Activated CD4-positive, alpha-beta memory T cell treated with anti-CD3 and anti-CD28 coated beads for 36 hours (primary cell): ENCODE measurements at regions of chr11 and their contacts with region 1.

Region 1: DNA sequence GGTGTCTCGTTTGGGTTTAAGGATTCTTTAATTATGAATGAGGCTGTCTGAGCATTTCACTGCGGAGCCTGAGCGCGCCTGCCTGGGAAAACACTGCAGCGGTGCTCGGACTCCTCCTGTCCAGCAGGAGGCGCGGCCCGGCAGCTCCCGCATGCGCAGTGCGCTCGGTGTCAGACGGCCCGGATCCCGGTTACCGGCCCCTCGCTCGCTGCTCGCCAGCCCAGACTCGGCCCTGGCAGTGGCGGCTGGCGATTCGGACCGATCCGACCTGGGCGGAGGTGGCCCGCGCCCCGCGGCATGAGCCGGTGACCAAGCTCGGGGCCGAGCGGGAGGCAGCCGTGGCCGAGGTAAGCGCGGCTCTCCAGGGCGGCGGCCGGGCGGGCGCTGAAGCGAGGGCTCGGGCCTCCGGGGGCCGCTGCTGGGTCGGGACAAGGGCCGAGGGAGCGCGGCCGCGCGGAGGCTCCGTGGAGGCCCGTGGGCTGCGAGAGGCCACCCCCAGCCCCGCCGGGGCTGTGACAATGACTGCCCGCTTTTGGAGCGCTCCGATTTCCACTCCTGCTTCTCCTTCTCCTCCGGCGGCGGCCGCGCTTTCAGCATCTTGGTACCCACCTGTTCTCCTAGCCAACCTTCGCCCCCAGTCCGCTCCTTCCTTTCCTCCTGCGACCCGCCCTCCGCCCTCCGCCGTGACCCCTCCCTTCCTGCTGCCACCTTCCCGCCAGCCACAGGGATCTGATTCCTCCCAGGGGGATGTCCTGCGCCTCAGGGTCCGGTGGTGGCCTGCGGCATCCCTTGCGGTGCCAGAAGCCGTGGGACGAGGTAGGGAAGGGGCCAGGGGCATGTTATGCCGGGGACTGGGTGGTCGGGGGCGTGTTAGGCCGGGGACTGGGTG is at the start of gene EXT2:
- DNase-seq: peak; percentile 90
- H3K4me3 Mint-ChIP-seq: peak within 1 kb of the TSS; percentile 83
- H3K27ac Mint-ChIP-seq: no peak within 1 kb of the TSS
- H3K4me1 Mint-ChIP-seq: peaks cover 26% of the 10 kb centered on the region
- H3K27me3 Mint-ChIP-seq: no peaks in the 10 kb centered on the region
- total RNA-seq, gene EXT2: 27.0 to 28.1 TPM

Region 2: DNA sequence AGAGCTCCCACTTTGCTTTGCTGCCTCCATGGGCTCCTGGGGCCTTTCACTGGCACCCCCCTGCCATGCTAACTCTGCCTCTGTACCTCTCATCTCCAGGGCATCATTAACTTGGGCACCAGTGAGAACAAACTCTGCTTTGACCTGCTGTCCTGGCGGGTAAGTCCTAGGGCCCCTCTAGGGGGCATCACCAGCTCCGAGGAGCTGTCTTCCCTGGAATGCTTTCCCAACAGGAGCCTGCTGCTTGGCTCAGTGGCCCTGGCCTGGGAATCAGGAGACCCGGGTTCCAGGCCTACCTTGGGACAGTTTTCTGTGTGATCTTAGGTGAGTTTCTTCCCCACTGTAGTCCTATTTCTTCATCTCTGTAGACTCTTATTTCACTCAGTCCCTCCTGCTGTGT is 24.6 kb before region 1 on chr11:
- CTCF ChIA-PET with region 1: interaction called, 21 read pairs
- POLR2A ChIA-PET with region 1: interaction called, 3 read pairs
- intact Hi-C with region 1: no loop called
- DNase-seq: no peak
- H3K4me3 Mint-ChIP-seq: no peak overlapping the region
- H3K27ac Mint-ChIP-seq: no peak overlapping the region
- H3K4me1 Mint-ChIP-seq: peaks cover 14% of the 10 kb centered on the region
- H3K27me3 Mint-ChIP-seq: no peaks in the 10 kb centered on the region

Region 3: DNA sequence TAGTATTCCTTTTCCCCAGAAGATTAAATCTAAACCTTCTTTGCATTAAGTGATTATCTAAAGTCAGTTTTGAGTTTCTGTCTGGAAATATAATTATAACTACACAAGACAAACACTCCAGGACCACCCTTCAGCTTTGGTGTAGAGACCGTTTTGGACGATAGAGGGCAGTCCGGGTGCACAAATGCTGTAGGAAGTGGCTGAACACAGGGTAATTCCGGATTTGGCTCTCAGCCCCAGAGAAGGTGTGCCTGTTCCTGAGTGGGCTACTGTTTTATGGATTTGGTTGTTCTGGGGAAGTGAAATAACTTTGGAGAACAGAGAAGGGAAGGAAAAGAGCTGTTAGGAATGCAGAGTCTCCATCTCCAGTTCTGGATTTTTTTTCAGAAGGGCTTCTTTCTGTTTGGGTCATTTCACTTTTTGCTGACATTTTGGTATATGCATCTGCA is 14.5 kb after region 1 on chr11:
- CTCF ChIA-PET with region 1: interaction called, 101 read pairs
- POLR2A ChIA-PET with region 1: interaction called, 9 read pairs
- intact Hi-C with region 1: no loop called
- DNase-seq: peak; percentile 70
- H3K4me3 Mint-ChIP-seq: no peak overlapping the region
- H3K27ac Mint-ChIP-seq: no peak overlapping the region
- H3K4me1 Mint-ChIP-seq: peaks cover 8% of the 10 kb centered on the region
- H3K27me3 Mint-ChIP-seq: no peaks in the 10 kb centered on the region

Region 4: GRCh38 chr11:44138286-44138685 is 42.5 kb after region 1 on chr11:
- CTCF ChIA-PET with region 1: interaction called, 13 read pairs
- POLR2A ChIA-PET with region 1: no interaction called
- intact Hi-C with region 1: no loop called
- DNase-seq: no peak
- H3K4me3 Mint-ChIP-seq: no peak overlapping the region
- H3K27ac Mint-ChIP-seq: no peak overlapping the region
- H3K4me1 Mint-ChIP-seq: no peaks in the 10 kb centered on the region
- H3K27me3 Mint-ChIP-seq: no peaks in the 10 kb centered on the region